Endothelial cell of umbilical vein (primary cell): ENCODE measurements at regions of chr2 and their contacts with region 1.

Region 1: DNA sequence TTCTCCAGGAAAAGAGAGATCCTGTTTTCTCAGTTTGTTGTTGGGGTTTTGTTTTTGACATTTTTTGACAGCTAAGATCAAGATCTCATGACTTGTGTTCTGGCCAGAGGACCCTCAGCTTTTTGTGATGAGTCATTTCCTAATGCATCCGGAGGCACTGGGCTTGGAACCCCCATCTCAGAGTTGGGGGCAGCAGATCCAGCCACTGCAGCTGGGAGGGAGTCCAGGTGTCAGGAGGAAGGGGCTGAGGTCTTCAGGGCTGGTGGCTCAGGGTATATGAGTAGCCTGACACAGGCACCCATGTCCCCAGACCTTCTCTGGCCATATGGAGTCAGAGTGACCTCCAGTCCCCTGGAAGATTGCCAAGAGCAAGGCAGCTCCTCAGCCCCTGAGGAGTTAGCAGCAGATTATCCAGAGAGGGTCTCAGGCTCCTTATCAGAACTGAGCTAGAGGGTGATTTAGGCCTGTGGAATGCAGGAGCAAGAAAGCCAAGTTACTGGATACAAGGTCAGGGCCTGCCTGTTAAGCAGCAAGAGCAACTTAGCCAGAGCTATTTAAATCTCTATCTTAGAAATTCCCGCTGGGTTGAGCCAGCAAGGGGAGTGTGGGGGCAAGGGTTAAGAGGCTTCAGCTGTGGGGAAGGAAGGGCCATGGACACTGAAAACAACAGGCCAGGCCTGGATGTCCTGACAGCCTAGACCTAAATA is 62.4 kb downstream of the TANC1 start:
- DNase-seq: peak; percentile 94
- H3K4me3 ChIP-seq: peak overlapping the region in 1 of 3 experiments; percentile 12
- H3K27ac ChIP-seq: peak overlapping the region; percentile 82
- H3K4me1 ChIP-seq: peaks cover 50% of the 10 kb centered on the region
- H3K27me3 ChIP-seq: no peaks in the 10 kb centered on the region
- CTCF ChIP-seq: no peak
- POLR2A ChIP-seq: no peak

Region 2: DNA sequence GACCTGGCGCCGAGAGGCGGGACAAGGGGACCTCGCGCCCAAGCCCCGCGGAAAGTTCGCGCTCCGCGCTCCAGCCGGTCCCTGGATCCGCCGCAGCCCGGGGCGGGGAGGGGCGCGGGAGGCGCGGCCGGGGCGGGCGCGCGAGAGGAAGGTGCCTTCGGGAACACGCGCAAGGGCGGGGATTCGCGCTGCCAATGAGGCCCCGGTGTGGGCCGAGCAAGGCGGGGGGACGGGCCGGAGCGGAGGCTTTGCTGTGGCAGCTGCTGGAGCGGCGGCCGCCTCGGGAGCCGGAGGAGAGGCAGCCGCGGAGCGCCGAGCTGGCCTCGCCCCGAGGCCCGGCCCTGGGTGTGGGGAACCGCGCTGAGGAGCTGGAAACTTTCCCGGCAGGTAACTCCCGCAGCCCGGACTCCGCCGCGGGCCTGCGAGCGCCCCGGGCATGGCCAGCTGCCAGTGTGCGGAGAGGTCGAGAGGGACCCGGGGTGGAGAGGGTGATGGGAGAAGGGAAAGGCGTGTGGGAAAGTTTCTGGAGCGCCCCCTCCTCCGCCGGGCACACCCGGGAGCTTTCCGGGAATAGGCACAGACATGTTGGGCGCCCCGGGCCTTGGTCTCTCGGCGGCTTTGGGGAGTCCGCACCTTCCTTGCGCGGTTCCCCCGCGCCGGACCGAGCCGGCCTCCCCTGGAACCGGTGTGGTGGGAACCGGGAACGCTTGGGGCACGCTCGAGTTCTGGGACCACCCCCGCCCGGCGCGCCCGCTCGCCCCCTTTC is 62.2 kb before region 1 on chr2 and contains the start of gene TANC1:
- CTCF ChIA-PET with region 1: interaction called, 4 read pairs
- POLR2A ChIA-PET with region 1: interaction called, 4 read pairs
- dilution Hi-C with region 1: no loop called
- intact Hi-C with region 1: loop called (anchors 1 kb)
- DNase-seq: peak; percentile 90
- H3K4me3 ChIP-seq: peak within 1 kb of the TSS; percentile 80 to 89 (median 89)
- H3K27ac ChIP-seq: peak within 1 kb of the TSS; percentile 75
- H3K4me1 ChIP-seq: peaks cover 36% of the 10 kb centered on the region
- H3K27me3 ChIP-seq: no peaks in the 10 kb centered on the region
- CTCF ChIP-seq: no peak
- POLR2A ChIP-seq: peak; percentile 96
- total RNA-seq, gene TANC1: 86.3 and 99.4 TPM in 2 replicates

Region 3: DNA sequence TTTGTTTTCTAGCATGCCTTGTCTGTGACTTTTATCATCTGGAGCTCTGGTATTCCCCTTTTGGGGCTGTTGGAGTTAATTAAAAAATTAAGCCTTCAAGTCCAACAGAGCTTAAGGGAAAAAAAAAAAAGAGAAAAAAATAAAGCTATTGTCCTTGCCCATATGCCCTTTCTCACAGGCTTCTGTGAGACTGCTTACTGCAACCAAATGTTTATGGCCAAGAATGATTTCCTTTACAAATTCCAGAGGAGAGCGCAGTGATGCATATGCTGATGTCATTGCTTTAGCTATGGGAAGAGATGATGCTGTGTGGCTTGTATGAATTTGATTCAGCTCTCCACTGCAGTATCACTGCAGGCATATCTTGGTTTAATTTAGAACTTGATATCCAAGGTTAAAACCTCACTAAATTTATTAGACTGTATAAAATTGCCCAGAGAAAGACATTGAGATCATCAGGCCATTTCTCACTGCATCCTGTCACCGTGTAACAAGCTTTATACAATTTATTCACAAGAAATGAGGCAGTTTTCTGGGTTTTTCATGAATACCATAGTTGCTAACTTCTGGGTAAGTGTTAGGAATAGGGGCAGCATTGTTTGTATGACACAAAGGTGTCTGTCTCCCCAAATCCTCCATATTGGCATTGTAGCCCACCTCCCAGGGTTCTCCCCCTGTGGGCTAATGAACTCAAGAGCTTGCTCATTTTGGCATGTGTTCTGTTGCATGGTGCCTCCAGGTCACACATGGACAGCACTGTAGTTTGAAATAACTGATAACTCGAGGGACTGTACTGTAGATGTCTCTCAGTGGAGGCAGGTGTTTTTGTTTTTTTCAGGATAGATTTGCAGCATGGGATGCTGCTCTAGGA is 22.6 kb after region 1 on chr2:
- CTCF ChIA-PET with region 1: interaction called, 21 read pairs
- POLR2A ChIA-PET with region 1: no interaction called
- dilution Hi-C with region 1: no loop called
- intact Hi-C with region 1: loop called (anchors 2 kb)
- DNase-seq: peak; percentile 96
- H3K4me3 ChIP-seq: no peak overlapping the region
- H3K27ac ChIP-seq: peak overlapping the region; percentile 49
- H3K4me1 ChIP-seq: peaks cover 16% of the 10 kb centered on the region
- H3K27me3 ChIP-seq: no peaks in the 10 kb centered on the region
- CTCF ChIP-seq: no peak
- POLR2A ChIP-seq: no peak

Region 4: DNA sequence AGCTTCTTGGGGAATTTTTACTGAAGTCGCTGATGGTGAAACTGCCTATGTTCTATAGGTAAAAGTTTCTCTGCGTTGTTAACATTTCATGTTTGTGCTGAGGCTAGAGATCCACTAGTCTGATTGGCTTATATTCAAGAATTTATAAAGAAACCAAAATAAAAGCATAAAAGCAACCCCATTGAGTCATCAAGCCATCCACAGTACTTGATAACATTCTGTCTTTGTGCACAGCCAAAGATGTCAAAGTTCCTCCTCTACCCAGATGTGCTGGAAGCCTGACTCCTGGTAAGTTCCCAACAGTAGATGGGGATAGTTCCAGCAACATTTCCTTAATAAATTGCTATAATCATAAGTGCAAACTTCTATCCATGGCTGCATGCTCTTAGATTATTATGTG is 45.4 kb after region 1 on chr2:
- CTCF ChIA-PET with region 1: interaction called, 10 read pairs
- POLR2A ChIA-PET with region 1: no interaction called
- dilution Hi-C with region 1: no loop called
- intact Hi-C with region 1: loop called (anchors 2 kb)
- DNase-seq: peak; percentile 87
- H3K4me3 ChIP-seq: no peak overlapping the region
- H3K27ac ChIP-seq: peak overlapping the region; percentile 46
- H3K4me1 ChIP-seq: peaks cover 66% of the 10 kb centered on the region
- H3K27me3 ChIP-seq: no peaks in the 10 kb centered on the region
- CTCF ChIP-seq: no peak
- POLR2A ChIP-seq: no peak